CD14-positive monocyte (primary cell): ENCODE measurements at regions of chr6 and their contacts with region 1.

Region 1: DNA sequence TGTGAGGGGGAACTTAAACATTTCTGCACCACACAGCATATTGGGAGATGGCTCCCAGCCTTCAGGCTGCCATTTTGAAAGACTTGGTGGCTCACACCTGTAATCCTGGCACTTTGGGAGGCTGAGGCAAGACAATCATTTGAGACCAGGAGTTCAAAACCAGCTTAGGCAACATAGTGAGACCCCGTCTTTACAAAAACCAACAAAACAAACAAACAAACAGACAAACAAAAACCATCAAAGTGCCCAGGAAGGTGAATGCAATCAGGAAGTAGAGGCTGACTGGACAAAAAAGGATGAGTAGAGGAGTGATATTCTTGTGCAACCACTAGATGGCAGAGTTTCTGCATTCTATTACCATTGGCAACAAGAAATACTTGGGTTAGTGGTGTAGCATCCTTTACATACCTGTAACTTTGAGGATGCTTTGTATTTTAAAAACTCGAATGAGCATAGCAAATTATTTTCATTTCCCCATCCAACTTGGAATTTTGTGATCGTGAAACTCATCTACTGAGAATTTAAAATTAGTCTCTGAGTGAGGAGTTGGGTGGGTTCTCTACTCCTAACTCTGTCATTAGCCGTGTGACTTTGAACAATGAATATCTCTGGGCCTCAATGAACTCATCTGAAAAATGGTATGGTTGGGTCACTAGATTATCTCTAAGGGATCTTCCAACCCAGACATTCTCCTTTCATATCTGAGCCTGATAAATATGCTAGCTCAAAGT is 84.4 kb downstream of the CRYBG1 start:
- DNase-seq: peak; percentile 66 to 81 (median 77)
- H3K4me3 ChIP-seq: no peak overlapping the region
- H3K4me3 Mint-ChIP-seq: no peak overlapping the region
- H3K27ac ChIP-seq: no peak overlapping the region
- H3K27ac Mint-ChIP-seq: peak overlapping the region in 1 of 7 donors; percentile 18
- H3K4me1 ChIP-seq: peaks cover 25 to 26% of the 10 kb centered on the region in 2 donors
- H3K4me1 Mint-ChIP-seq: peaks cover 26% of the 10 kb centered on the region
- H3K27me3 ChIP-seq: peaks cover 7 to 9% of the 10 kb centered on the region in 2 donors
- H3K27me3 Mint-ChIP-seq: peaks cover 12 to 23% (median 15%) of the 10 kb centered on the region in 3 donors
- CTCF ChIP-seq: peak; percentile 82

Region 2: DNA sequence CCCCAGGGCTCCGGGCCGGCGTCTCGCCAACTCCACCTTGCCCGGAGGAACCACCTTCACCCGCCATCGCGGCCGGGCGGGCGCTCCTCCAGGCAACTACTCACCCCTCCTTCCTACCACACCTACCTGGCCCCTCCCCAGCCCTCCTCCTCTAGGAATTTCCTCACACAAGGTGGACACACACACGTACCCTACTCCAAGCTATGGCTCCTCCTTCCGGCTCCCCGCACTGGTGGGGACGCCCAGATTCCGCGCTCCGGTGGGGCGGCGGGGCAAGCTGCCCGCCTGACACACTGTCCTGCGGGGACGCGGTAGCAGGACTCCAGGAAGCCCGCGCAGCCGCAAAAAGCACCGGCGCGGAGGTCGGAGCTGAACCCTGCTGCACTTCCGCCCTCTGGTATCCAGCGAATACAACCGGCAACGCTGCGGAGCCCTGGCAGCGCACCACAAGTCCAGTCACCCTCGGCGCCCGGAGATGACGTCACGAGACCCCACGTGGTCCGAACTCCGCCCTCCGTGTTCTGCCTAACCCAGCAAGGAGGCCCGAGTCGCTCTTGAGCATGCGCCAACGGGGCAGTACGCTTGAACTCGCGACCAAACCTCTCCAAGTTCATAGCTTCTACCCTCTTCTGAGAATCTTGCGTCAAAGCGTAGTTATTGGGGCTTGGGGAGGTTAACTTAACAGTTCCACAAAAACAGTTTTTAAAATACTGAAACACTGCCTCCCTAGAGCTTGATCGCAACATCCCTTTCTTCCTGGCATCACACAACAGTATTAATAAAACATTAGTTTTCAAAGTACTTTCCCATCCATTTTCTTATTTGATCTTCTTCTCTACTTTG is 119.4 kb before region 1 on chr6 and contains the start of gene ATG5:
- intact Hi-C with region 1: loop called (anchors 5 to 10 kb)
- DNase-seq: peak; percentile 99 to 100 (median 99)
- H3K4me3 ChIP-seq: peak within 1 kb of the TSS; percentile 92 to 99 (median 93)
- H3K4me3 Mint-ChIP-seq: peak within 1 kb of the TSS; percentile 98
- H3K27ac ChIP-seq: peak within 1 kb of the TSS; percentile 94 to 100
- H3K27ac Mint-ChIP-seq: peak within 1 kb of the TSS; percentile 95 to 99 (median 98)
- H3K4me1 ChIP-seq: peaks cover 15 to 25% of the 10 kb centered on the region in 2 donors
- H3K4me1 Mint-ChIP-seq: peaks cover 26% of the 10 kb centered on the region
- H3K27me3 ChIP-seq: peaks cover 2 to 3% of the 10 kb centered on the region in 2 donors
- H3K27me3 Mint-ChIP-seq: peaks cover 5 to 19% (median 13%) of the 10 kb centered on the region in 3 donors
- CTCF ChIP-seq: no peak
- polyA plus RNA-seq, gene ATG5: 15.0 to 31.4 (median 29.9) TPM

Region 3: GRCh38 chr6:106560996-106561685 is 116.2 kb after region 1 on chr6:
- intact Hi-C with region 1: loop called in 1 of 2 experiments (anchors 2 kb)
- DNase-seq: peak in 2 of 3 donors; percentile 60 to 76
- H3K4me3 ChIP-seq: peak overlapping the region in 1 of 3 experiments; percentile 53
- H3K4me3 Mint-ChIP-seq: no peak overlapping the region
- H3K27ac ChIP-seq: peak overlapping the region; percentile 41 to 84
- H3K27ac Mint-ChIP-seq: peak overlapping the region; percentile 56 to 95 (median 92)
- H3K4me1 ChIP-seq: peaks cover 36 to 45% of the 10 kb centered on the region in 2 donors
- H3K4me1 Mint-ChIP-seq: peaks cover 49% of the 10 kb centered on the region
- H3K27me3 ChIP-seq: no peaks in the 10 kb centered on the region
- H3K27me3 Mint-ChIP-seq: peaks cover 0 to 1% (median 0%) of the 10 kb centered on the region in 3 donors
- CTCF ChIP-seq: no peak

Region 4: DNA sequence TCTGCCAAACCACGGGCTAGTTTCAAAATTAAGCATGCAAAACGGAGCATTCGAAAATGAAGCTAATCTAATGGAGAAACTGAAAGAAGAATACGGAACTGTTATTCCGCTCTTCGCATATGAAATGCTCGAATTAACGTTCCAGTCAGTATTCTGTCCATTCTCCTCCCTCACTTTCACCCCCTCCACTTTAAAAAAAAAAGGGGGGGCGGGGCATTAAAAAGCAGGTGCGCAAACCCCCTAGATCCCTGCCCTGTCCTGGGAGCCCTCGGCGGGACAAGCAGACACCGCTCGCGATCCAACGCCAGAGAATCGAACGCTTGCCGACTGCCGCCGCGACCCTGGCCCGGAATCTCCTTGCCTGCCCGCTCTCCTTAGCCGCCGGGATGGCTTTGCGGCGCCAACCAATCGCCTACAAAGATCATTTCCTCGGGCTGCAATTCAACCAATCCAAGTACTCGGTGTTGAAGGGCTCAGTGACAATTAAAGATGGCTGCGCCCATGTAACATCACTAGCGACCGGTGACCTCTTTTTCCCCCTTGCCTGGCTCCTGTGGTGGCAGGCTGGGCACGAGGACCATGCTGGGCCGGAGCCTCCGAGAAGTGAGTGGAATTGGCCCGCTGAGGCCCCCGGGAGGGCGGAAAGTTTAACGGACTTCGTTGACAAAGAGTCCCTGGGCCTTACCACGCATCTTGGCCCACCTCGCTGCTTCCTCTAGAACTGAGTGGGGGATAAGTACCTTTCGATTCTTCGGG is 184.3 kb after region 1 on chr6 and contains the starts of genes QRSL1 and RTN4IP1:
- intact Hi-C with region 1: loop called in 1 of 2 experiments (anchors 5 kb)
- DNase-seq: peak; percentile 86 to 91 (median 90)
- H3K4me3 ChIP-seq: peak within 1 kb of the TSS; percentile 86 to 95 (median 88)
- H3K4me3 Mint-ChIP-seq: peak within 1 kb of the TSS; percentile 95
- H3K27ac ChIP-seq: peak within 1 kb of the TSS; percentile 90 to 93
- H3K27ac Mint-ChIP-seq: peak within 1 kb of the TSS; percentile 95 to 99 (median 98)
- H3K4me1 ChIP-seq: peaks cover 17 to 22% of the 10 kb centered on the region in 2 donors
- H3K4me1 Mint-ChIP-seq: peaks cover 20% of the 10 kb centered on the region
- H3K27me3 ChIP-seq: no peaks in the 10 kb centered on the region
- H3K27me3 Mint-ChIP-seq: peaks cover 0 to 3% (median 0%) of the 10 kb centered on the region in 3 donors
- CTCF ChIP-seq: no peak
- polyA plus RNA-seq, gene QRSL1: 5.7 to 7.8 (median 5.8) TPM
- polyA plus RNA-seq, gene RTN4IP1: 3.5 to 6.7 (median 4.5) TPM

Region 5: DNA sequence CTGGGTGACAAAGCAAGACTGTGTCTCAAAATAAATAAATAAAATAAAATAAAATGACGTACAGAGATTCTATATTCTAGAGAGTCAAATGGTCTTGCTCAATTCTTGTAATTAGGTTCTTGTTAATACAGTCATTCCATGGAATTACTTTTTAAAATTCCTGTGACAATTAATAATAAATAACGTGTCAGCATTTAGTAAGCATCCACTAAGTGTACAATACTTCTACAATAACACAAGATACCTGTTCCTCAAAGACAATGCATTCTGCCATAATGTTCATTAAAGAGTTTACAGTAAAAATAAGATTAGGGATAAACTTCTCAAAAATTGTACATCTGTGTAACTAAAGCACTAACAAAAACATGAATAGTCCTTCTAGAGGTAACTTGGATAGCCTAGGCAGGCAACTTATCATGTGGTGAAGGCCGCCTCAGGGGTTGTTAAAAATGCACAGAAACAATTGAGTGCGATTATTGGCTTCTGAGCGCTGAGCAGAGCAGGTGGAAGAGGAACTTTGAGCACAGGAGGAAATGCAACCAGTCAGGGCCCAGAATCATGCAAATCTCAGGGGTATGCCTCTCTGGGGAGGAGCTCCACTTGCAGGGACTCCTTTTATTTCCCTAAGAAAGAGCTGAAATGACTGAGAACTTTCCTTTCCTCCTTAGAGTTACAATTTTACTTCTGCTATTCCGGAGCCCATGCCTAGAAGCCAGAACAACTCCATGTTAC is 221.5 kb after region 1 on chr6:
- intact Hi-C with region 1: no loop called
- DNase-seq: peak; percentile 1 to 8 (median 4)
- H3K4me3 ChIP-seq: no peak overlapping the region
- H3K4me3 Mint-ChIP-seq: peak overlapping the region in 1 of 2 donors; percentile 41
- H3K27ac ChIP-seq: peak overlapping the region in 1 of 2 donors; percentile 46
- H3K27ac Mint-ChIP-seq: peak overlapping the region in 6 of 7 donors; percentile 12 to 76 (median 35)
- H3K4me1 ChIP-seq: peaks cover 14 to 23% of the 10 kb centered on the region in 2 donors
- H3K4me1 Mint-ChIP-seq: peaks cover 22% of the 10 kb centered on the region
- H3K27me3 ChIP-seq: no peaks in the 10 kb centered on the region
- H3K27me3 Mint-ChIP-seq: no peaks in the 10 kb centered on the region
- CTCF ChIP-seq: no peak

Region 6: DNA sequence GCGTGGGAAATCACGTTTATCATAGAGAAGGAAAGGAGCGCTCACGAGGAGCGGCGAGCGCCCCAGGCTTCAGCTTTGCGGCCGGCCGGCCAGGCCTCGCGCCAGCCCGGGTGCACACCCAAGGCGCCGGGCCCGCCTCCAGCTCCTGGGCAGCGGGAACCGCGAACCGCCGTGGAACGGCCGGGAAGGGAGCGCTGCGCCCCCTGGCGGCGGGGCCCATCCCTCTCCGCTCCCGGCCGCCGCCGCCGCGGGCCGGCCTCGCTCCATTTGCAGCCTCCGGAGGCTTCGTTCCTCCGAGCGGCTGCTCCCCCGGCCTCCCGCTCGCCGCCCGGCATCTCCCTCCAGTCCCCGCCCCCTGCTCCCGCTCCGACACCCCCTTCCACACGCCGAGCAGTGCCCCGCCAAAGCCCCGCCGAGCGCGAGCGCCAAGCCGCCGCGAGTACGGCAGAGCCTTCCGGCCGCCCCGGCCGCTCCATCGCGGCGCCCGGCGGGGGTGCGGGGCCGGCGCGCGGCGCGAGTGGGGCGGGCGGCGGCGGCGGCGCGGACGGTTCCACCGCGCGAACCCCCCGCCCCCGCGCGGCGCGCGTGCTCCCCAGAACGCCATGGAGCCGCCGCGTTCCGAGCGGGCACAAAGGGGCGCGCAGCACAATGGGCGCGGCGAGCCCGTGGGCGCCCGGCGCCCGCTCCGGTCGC is 669.4 kb after region 1 on chr6:
- intact Hi-C with region 1: loop called in 1 of 2 experiments (anchors 10 kb)
- DNase-seq: peak; percentile 72 to 82 (median 81)
- H3K4me3 ChIP-seq: peak overlapping the region; percentile 12 to 71 (median 65)
- H3K4me3 Mint-ChIP-seq: peak overlapping the region; percentile 82 to 83
- H3K27ac ChIP-seq: no peak overlapping the region
- H3K27ac Mint-ChIP-seq: peak overlapping the region in 2 of 7 donors; percentile 40 to 50
- H3K4me1 ChIP-seq: peaks cover 39 to 40% of the 10 kb centered on the region in 2 donors
- H3K4me1 Mint-ChIP-seq: peaks cover 38% of the 10 kb centered on the region
- H3K27me3 ChIP-seq: peaks cover 9 to 23% of the 10 kb centered on the region in 2 donors
- H3K27me3 Mint-ChIP-seq: peaks cover 19 to 26% (median 21%) of the 10 kb centered on the region in 3 donors
- CTCF ChIP-seq: peak; percentile 92